ENCODE measurements at regions of chr12 and their contacts with region 1.

Region 1: GRCh38 chr12:5648692-5649359 is 216.9 kb downstream of the NTF3 start:
- DNase-seq: peak; percentile 44
- H3K4me3 ChIP-seq: no peak overlapping the region
- H3K27ac ChIP-seq: no peak overlapping the region
- H3K4me1 ChIP-seq: no peaks in the 10 kb centered on the region
- CTCF ChIP-seq: peak; percentile 73

Region 2: GRCh38 chr12:5200278-5201087 is 448.3 kb before region 1 on chr12:
- CTCF ChIA-PET with region 1: no interaction called
- POLR2A ChIA-PET with region 1: no interaction called
- intact Hi-C with region 1: loop called (anchors 10 kb)
- DNase-seq: peak; percentile 48
- H3K4me3 ChIP-seq: no peak overlapping the region
- H3K27ac ChIP-seq: no peak overlapping the region
- H3K4me1 ChIP-seq: no peaks in the 10 kb centered on the region
- CTCF ChIP-seq: peak; percentile 86

Region 3: DNA sequence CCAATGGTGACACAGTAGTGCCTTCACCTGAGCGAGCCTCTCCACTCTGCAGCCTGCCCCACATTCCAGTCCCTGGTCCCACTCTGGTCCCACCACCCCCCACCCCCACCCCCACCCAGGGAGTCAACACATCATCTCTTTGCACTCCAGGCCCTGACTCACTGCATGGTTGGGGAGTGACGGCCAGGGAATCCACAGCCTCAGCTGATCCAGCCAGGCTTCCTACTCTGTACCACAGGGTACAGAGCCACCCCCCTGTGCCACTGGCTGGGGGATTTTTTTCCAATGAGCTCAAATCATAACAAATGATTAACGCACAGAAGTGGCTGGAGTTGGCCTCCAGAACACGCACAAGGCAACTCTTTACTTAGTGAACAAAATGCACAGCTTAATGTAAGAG is 16.8 kb after region 1 on chr12:
- CTCF ChIA-PET with region 1: no interaction called
- POLR2A ChIA-PET with region 1: no interaction called
- intact Hi-C with region 1: no loop called
- DNase-seq: no peak
- H3K4me3 ChIP-seq: no peak overlapping the region
- H3K27ac ChIP-seq: no peak overlapping the region
- H3K4me1 ChIP-seq: no peaks in the 10 kb centered on the region
- CTCF ChIP-seq: no peak

Measured in OCI-LY7 (cell line).